ENCODE measurements at regions of chr12 and their contacts with region 1.

Region 1: DNA sequence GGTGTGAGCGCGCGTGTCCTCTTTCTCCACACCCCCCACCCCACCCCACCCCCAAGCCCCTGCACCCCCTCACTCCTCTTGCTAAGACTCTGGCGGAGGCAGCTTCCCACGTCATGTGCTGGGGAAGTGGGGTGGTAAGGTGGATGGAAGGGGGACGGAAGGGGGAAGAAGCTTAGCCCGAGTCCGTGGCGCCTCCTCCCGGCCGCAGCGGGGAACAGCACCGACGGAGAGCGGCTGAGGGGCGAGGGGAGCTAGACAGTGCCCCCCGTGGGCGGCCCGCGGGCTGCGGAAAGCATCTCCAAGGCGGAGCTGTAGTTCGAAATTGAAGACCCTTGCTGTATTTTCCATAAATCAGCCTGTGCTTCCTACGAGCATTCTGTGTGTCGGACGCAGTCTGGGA is 588 bp upstream of the GRIN2B start:
- DNase-seq: no peak
- ATAC-seq: no peak
- H3K4me3 ChIP-seq: peak overlapping the region in 4 of 10 donors; percentile 11 to 41 (median 30)
- H3K27ac ChIP-seq: no peak overlapping the region
- H3K4me1 ChIP-seq: peaks cover 0 to 23% (median 12%) of the 10 kb centered on the region in 9 donors
- H3K27me3 ChIP-seq: peaks cover 15 to 99% (median 88%) of the 10 kb centered on the region in 7 donors
- CTCF ChIP-seq: peak in 6 of 9 donors; percentile 21 to 30 (median 30)

Region 2: DNA sequence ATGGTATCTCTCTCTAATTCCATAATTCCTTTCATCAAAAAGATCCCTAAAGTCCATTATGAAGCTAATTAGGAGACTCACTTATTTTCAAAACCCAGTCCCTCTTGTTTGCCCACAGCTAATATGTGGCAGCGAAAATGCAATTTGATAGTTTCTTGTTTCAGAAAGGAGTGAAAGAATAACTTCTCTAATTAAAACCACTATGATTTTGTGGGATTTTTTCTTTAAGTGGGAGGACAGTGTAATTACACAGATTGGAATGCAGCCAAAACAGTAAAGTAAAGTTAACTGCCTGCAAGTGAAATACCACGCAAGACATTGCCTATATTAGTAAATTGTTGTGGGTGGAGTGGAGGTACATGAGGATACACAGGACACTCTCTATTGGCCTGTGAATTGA is 1390.4 kb after region 1 on chr12:
- intact Hi-C with region 1: loop called in 1 of 10 experiments (anchors 5 kb)
- DNase-seq: no peak
- ATAC-seq: no peak
- H3K4me3 ChIP-seq: no peak overlapping the region
- H3K27ac ChIP-seq: no peak overlapping the region
- H3K4me1 ChIP-seq: no peaks in the 10 kb centered on the region
- H3K27me3 ChIP-seq: peaks cover 0 to 11% (median 0%) of the 10 kb centered on the region in 7 donors
- CTCF ChIP-seq: no peak